ENCODE measurements at regions of chr11 and their contacts with region 1.

Region 1: DNA sequence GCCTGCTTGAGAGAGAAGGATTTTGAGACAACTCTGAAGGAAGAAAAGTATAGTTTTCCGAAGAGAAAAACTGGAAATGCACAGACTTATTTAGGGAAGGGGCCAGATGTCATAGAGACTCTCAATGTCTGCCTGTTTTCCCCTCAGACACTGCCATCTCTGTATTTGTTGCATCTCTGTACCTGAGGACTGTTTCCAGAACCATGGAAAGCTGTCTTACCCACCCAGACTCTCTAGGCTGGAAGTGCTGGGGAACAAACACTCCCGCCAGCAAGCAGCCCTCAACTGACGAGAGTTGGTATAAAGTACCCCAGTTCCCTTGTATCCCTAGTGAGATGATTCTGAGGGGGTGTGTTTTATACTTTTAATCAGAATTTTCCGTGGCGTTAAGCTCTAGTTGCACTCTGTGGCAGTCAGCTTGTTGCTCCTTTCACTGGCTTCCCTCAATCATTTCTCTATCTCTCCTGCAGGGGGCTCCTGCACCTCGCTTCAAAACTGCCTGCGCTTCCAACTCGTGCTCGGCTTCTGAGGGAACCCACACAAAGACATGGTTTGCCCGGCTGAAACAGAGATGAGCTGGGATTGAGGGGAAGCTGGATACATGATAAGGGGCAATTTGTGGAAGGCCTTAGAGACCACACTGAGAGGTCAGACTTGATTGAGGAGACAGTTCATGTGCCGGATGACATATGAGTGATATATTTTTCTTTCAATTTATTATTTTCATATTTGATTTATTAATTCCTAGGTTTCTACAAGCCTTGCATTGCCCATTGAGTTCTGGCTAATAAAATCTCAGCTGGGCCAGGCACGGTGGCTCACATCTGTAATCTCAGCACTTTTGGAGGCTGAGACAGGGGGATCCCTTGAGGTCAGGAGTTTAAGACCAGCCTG is 36.9 kb upstream of the CLPB start:
- DNase-seq: peak; percentile 74
- ATAC-seq: peak; percentile 62
- H3K4me3 ChIP-seq: no peak overlapping the region
- H3K4me3 Mint-ChIP-seq: peak overlapping the region; percentile 14
- H3K27ac ChIP-seq: no peak overlapping the region
- H3K27ac Mint-ChIP-seq: no peak overlapping the region
- H3K4me1 ChIP-seq: peaks cover 0 to 7% of the 10 kb centered on the region in 2 donors
- H3K4me1 Mint-ChIP-seq: peaks cover 4% of the 10 kb centered on the region
- H3K27me3 ChIP-seq: peaks cover 0 to 29% (median 10%) of the 10 kb centered on the region in 4 experiments
- H3K27me3 Mint-ChIP-seq: peaks cover 40% of the 10 kb centered on the region
- CTCF ChIP-seq: peak; percentile 89

Region 2: DNA sequence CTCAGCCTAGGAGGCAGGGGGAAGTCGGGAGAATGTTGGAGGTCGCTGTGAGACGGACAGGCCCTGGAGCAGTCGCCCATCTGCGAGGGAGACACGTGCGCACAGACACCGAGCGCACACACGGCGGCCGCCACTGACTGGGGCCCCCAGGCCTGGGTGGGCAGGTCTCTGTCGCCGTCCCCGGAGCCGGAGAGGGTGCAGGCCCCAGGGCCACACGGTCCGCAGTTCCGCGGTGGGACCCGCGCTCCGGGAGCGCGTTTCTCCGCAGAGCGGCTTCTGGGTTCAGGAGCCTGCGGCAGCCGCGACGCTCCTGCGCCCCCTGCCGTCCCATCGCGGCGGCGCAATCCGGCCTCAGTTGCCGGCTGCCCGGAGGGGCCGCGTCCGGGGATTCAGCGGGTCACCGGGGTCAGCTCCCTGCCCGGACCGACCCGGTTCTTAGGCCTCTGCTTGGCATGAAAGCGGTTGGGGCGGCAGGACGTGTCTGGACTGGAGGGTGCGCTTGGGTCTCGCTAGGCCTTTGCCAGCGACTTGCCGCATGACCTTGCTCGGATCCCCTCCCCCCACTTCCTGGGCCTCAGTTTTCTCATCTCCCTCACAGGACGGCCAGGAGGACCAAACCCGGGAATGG is 171.7 kb after region 1 on chr11:
- CTCF ChIA-PET with region 1: interaction called, 24 read pairs
- POLR2A ChIA-PET with region 1: no interaction called
- intact Hi-C with region 1: loop called (anchors 1 kb)
- DNase-seq: peak; percentile 87
- ATAC-seq: peak; percentile 82
- H3K4me3 ChIP-seq: peak overlapping the region in 4 of 5 experiments; percentile 27 to 54 (median 36)
- H3K4me3 Mint-ChIP-seq: peak overlapping the region; percentile 79
- H3K27ac ChIP-seq: no peak overlapping the region
- H3K27ac Mint-ChIP-seq: peak overlapping the region; percentile 4
- H3K4me1 ChIP-seq: peaks cover 13 to 16% of the 10 kb centered on the region in 2 donors
- H3K4me1 Mint-ChIP-seq: peaks cover 4% of the 10 kb centered on the region
- H3K27me3 ChIP-seq: peaks cover 0 to 51% (median 22%) of the 10 kb centered on the region in 4 experiments
- H3K27me3 Mint-ChIP-seq: peaks cover 14% of the 10 kb centered on the region
- CTCF ChIP-seq: peak; percentile 99